Vagina (tissue), 2 donors: ENCODE measurements at regions of chr6 and their contacts with region 1.

Region 1: GRCh38 chr6:137115658-137116057 is 57.8 kb downstream of the IL22RA2 start:
- DNase-seq: no peak
- H3K4me3 ChIP-seq: no peak overlapping the region
- H3K27ac ChIP-seq: no peak overlapping the region
- H3K4me1 ChIP-seq: no peaks in the 10 kb centered on the region
- H3K27me3 ChIP-seq: no peaks in the 10 kb centered on the region
- CTCF ChIP-seq: no peak
- POLR2A ChIP-seq: no peak

Region 2: GRCh38 chr6:138734585-138734984 is 1618.9 kb after region 1 on chr6:
- intact Hi-C with region 1: loop called (anchors 5 kb)
- DNase-seq: no peak
- H3K4me3 ChIP-seq: no peak overlapping the region
- H3K27ac ChIP-seq: no peak overlapping the region
- H3K4me1 ChIP-seq: no peaks in the 10 kb centered on the region
- H3K27me3 ChIP-seq: no peaks in the 10 kb centered on the region
- CTCF ChIP-seq: no peak
- POLR2A ChIP-seq: no peak